ENCODE measurements at regions of chr6 and their contacts with region 1.

Region 1: GRCh38 chr6:75526502-75527127 is 33.0 kb upstream of the FILIP1 start:
- DNase-seq: peak; percentile 50 to 67
- H3K4me3 ChIP-seq: no peak overlapping the region
- H3K27ac ChIP-seq: no peak overlapping the region
- H3K4me1 ChIP-seq: peaks cover 12% of the 10 kb centered on the region
- H3K27me3 ChIP-seq: no peaks in the 10 kb centered on the region
- CTCF ChIP-seq: peak; percentile 83

Region 2: GRCh38 chr6:75101896-75102295 is 424.7 kb before region 1 on chr6:
- CTCF ChIA-PET with region 1: no interaction called
- POLR2A ChIA-PET with region 1: no interaction called
- intact Hi-C with region 1: loop called (anchors 10 kb)
- DNase-seq: peak in 1 of 2 experiments; percentile 48
- H3K4me3 ChIP-seq: no peak overlapping the region
- H3K27ac ChIP-seq: no peak overlapping the region
- H3K4me1 ChIP-seq: peaks cover 60% of the 10 kb centered on the region
- H3K27me3 ChIP-seq: no peaks in the 10 kb centered on the region
- CTCF ChIP-seq: no peak

Region 3: DNA sequence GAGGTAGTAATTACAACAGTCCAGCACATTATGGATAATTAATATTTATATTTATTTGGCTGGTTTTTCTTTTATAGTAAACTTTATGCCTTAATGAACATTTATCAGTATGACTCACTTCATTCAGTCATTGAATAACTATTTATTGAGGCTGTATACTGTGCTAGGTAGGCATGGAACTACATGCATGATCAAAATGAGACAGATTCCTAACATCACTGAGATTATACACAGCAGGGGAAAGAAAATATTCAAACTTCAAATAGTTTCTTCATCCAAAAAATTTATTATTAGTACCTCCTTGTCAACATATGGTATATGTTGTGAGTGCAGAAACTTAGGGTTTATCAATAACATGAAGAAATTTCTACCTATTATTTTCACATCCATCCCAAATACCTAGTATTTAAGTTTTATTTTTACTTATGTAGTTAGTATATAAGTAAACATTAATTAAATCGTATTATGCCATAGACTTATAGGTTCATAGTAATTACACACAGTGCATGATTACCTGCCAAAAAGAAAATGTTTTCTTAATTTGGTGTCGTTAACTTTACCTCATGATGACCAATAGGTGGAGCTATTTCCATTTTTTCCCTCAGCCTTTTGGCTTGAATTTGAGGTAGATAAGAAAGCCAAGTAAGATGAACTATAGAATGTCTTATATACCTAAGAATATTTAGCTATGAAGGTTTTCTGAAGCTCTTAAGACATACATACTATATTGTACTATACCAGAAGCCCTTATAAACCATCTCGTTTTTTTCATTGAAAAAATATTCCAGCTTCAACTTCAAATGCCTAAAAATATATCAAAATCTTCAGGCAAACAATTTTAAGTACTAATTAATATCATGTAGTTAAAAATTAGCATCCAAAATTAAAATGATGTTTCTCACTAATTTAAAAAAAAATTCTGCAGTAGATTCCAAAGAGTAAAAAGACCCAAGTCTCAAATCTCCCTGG is 229.5 kb before region 1 on chr6:
- CTCF ChIA-PET with region 1: interaction called, 12 read pairs
- POLR2A ChIA-PET with region 1: no interaction called
- intact Hi-C with region 1: loop called (anchors 1 kb)
- DNase-seq: peak in 1 of 2 experiments; percentile 48
- H3K4me3 ChIP-seq: no peak overlapping the region
- H3K27ac ChIP-seq: no peak overlapping the region
- H3K4me1 ChIP-seq: no peaks in the 10 kb centered on the region; the same call in 1 of the 2 replicates
- H3K27me3 ChIP-seq: no peaks in the 10 kb centered on the region
- CTCF ChIP-seq: peak; percentile 89

Region 4: DNA sequence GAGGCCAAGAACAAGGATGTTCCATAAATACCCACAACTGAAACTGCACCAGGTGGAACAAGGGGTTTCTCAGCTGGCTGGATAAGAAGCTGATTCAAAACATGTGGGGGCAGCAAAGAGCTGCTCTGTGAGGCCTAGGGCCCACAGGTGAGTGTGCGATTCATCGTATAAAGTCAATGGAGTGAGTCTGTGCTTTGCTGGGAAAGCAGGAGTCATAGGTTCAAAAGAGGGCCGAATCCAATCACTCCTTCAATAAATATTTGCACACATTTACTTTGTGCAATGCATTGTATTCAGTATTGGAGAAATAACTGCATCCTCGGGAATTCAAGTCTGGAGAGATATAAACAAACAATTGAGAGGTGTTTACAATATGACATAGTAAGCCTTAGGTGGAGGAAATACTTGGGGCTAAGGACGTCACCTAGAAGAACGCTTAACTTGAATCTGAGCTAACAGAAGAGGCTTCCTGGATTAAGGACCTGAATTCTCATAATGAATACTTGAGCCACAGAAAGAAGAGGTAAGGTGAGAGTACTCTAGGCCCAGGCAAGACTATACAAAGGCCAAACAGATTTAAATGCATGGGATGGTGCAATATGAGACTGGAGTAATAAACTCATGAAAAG is 158.3 kb before region 1 on chr6:
- CTCF ChIA-PET with region 1: interaction called, 3 read pairs
- POLR2A ChIA-PET with region 1: no interaction called
- intact Hi-C with region 1: loop called (anchors 1 kb)
- DNase-seq: peak in 1 of 2 experiments; percentile 24
- H3K4me3 ChIP-seq: no peak overlapping the region
- H3K27ac ChIP-seq: no peak overlapping the region
- H3K4me1 ChIP-seq: no peaks in the 10 kb centered on the region
- H3K27me3 ChIP-seq: no peaks in the 10 kb centered on the region
- CTCF ChIP-seq: peak; percentile 38; the same call in 1 of the 2 replicates

Region 5: DNA sequence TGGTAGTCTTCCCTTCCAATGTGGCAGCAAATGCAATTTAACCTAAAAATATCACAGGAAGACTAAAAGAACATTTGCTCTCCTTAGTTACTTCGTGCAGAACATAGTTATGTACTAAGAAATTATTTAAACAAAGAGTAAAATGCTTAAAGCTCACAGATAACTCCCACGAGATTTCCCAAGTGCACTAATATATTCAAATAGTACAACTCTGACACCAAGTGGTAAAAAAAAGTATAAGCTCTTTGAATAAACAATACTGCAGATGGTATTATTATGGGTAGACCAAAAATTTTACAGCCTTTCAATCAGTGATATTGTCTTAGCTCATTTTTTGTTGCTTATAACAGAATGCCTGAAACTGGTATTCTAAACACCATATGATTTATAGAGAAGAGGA is 19.8 kb after region 1 on chr6:
- CTCF ChIA-PET with region 1: interaction called, 6 read pairs
- POLR2A ChIA-PET with region 1: interaction called, 14 read pairs
- intact Hi-C with region 1: no loop called
- DNase-seq: no peak
- H3K4me3 ChIP-seq: no peak overlapping the region
- H3K27ac ChIP-seq: no peak overlapping the region
- H3K4me1 ChIP-seq: no peaks in the 10 kb centered on the region
- H3K27me3 ChIP-seq: no peaks in the 10 kb centered on the region
- CTCF ChIP-seq: peak; percentile 48

Measured in PC-9 (cell line).